ENCODE measurements at regions of chr12 and their contacts with region 1.

Region 1: GRCh38 chr12:21559855-21560569 is 33.9 kb downstream of the SPX start:
- DNase-seq: no peak
- H3K4me3 Mint-ChIP-seq: no peak overlapping the region
- H3K27ac Mint-ChIP-seq: peak overlapping the region; percentile 75
- H3K4me1 Mint-ChIP-seq: peaks cover 11% of the 10 kb centered on the region
- H3K27me3 Mint-ChIP-seq: no peaks in the 10 kb centered on the region

Region 2: DNA sequence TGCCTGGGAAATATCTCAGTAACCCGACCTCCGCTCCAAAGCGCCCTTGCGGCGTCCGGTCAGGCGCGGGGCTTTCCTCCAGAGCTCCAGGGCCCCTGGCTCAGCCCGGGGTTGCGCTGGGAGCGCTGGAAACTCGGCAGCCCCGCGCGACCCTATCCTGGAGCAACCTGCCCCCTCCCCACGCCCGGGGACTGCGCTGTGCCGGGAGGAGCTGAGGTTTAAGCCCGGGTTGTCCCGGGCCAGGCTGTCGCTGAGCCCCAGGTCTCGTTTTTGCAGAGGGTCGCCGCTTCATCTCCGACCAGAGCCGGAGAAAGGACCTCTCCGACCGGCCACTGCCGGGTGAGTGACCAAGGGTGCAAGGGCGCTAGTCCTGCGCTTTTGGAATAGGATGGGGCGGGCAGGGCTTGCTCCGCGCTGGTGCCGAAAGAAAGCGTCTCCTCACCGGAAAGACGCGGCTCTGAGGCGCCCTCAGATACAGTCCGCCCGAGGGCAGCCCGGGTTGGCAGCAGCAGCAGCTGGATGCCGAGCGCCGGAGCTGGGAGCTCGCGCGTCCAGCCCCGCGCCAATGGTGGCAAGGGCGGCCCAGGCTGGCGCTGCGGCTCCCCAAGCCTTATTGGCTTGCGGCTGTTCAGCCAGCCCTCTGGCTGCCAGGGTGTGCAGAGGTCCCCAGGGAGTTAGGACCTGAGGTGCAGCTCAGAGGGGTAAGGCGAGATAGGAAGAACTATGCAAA is 32.4 kb before region 1 on chr12:
- intact Hi-C with region 1: loop called (anchors 5 kb)
- DNase-seq: peak; percentile 57
- H3K4me3 Mint-ChIP-seq: peak overlapping the region; percentile 77
- H3K27ac Mint-ChIP-seq: no peak overlapping the region
- H3K4me1 Mint-ChIP-seq: peaks cover 8% of the 10 kb centered on the region
- H3K27me3 Mint-ChIP-seq: peaks cover 25% of the 10 kb centered on the region

Region 3: GRCh38 chr12:21546716-21547115 is 13.3 kb before region 1 on chr12:
- intact Hi-C with region 1: loop called (anchors 1 kb)
- DNase-seq: no peak
- H3K4me3 Mint-ChIP-seq: no peak overlapping the region
- H3K27ac Mint-ChIP-seq: no peak overlapping the region
- H3K4me1 Mint-ChIP-seq: peaks cover 14% of the 10 kb centered on the region
- H3K27me3 Mint-ChIP-seq: no peaks in the 10 kb centered on the region

Region 4: DNA sequence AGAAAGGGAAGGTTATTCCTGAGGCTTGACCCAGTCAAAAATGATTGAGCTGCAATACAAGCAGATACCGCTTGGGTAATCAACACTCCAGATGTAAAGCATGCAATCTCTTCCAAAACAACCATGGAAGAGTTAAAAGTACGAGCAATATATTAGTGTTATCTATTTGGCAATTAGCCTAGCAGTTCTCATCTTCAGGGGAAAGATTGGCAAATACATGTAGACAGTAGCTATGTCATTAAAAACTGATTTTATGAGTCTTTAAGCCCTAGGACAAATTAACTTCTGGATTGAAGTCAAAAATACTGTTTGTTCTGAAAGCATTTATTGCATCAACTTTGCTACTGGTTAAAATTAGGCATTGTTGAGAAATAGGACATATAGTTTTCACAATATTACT is 53.9 kb after region 1 on chr12:
- intact Hi-C with region 1: loop called (anchors 1 kb)
- DNase-seq: no peak
- H3K4me3 Mint-ChIP-seq: no peak overlapping the region
- H3K27ac Mint-ChIP-seq: no peak overlapping the region
- H3K4me1 Mint-ChIP-seq: peaks cover 40% of the 10 kb centered on the region
- H3K27me3 Mint-ChIP-seq: no peaks in the 10 kb centered on the region

Region 5: GRCh38 chr12:21843795-21844194 is 283.8 kb after region 1 on chr12:
- intact Hi-C with region 1: no loop called
- DNase-seq: no peak
- H3K4me3 Mint-ChIP-seq: no peak overlapping the region
- H3K27ac Mint-ChIP-seq: no peak overlapping the region
- H3K4me1 Mint-ChIP-seq: no peaks in the 10 kb centered on the region
- H3K27me3 Mint-ChIP-seq: no peaks in the 10 kb centered on the region

Region 6: DNA sequence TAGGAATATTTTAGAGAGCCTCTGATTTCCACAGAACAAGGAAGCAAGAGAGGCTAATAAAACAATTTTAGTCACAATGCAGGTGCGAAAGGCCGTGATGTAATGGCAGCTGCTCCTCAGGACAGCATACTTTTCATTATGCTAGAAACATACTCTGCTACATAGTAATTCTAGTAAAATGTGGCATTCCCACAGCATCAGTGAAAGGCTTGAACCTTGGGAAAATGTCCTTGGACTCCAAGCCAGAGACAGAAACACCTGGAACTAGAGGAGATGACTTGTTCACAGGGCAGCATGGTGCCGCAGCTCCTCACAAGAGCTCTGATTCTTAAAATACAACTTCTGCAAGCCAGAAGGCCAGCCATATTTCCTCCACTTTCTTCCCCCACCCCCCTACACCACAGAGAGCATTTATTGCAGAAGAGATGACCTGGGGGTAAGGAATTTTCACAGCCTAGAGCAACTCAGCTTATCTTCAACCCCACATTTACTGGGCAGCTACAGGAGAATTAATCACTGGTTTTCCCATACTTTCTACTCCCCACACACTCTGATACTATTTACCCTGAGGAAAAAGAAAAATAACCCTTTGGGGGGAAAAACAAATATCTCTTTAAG is 365.4 kb after region 1 on chr12:
- intact Hi-C with region 1: no loop called
- DNase-seq: no peak
- H3K4me3 Mint-ChIP-seq: no peak overlapping the region
- H3K27ac Mint-ChIP-seq: no peak overlapping the region
- H3K4me1 Mint-ChIP-seq: no peaks in the 10 kb centered on the region
- H3K27me3 Mint-ChIP-seq: no peaks in the 10 kb centered on the region